CD8-positive, alpha-beta T cell (primary cell): ENCODE measurements at regions of chr1 and their contacts with region 1.

Region 1: GRCh38 chr1:160284782-160285344 is at the start of gene PEX19:
- DNase-seq: peak; percentile 87 to 96 (median 93)
- ATAC-seq: peak; percentile 100
- H3K4me3 ChIP-seq: peak within 1 kb of the TSS; percentile 73 to 89
- H3K4me3 Mint-ChIP-seq: peak within 1 kb of the TSS; percentile 94
- H3K27ac ChIP-seq: peak within 1 kb of the TSS; percentile 62 to 75
- H3K27ac Mint-ChIP-seq: peak within 1 kb of the TSS; percentile 91
- H3K4me1 ChIP-seq: peaks cover 22% of the 10 kb centered on the region
- H3K4me1 Mint-ChIP-seq: peaks cover 21% of the 10 kb centered on the region
- H3K27me3 ChIP-seq: no peaks in the 10 kb centered on the region
- H3K27me3 Mint-ChIP-seq: no peaks in the 10 kb centered on the region
- CTCF ChIP-seq: no peak
- total RNA-seq, gene PEX19: 36.0 to 37.4 TPM

Region 2: DNA sequence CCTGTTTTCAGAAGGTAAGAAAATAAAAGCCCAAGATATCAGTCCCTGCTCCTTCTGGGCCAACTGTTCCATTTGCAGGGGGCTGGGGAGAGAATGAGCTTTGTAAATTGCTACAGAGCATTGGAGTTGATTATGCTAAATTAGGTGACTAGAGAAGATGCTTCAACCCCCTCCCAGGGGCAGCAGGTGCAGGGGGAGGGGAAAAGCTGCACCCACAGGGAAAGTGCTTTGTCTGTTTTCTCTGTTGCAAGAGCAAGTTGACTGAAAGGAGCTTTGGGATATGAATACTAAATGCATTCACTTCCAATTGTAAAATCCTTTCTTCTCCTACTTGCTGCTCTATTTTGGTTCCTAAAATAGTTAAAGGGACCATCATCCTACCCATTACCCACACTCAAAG is 236.5 kb before region 1 on chr1:
- CTCF ChIA-PET with region 1: no interaction called
- POLR2A ChIA-PET with region 1: no interaction called
- intact Hi-C with region 1: no loop called
- DNase-seq: no peak
- ATAC-seq: no peak
- H3K4me3 ChIP-seq: no peak overlapping the region
- H3K4me3 Mint-ChIP-seq: no peak overlapping the region
- H3K27ac ChIP-seq: no peak overlapping the region
- H3K27ac Mint-ChIP-seq: no peak overlapping the region
- H3K4me1 ChIP-seq: peaks cover 6% of the 10 kb centered on the region
- H3K4me1 Mint-ChIP-seq: peaks cover 12% of the 10 kb centered on the region
- H3K27me3 ChIP-seq: peaks cover 0 to 2% of the 10 kb centered on the region in 2 experiments
- H3K27me3 Mint-ChIP-seq: peaks cover 20% of the 10 kb centered on the region
- CTCF ChIP-seq: no peak

Region 3: DNA sequence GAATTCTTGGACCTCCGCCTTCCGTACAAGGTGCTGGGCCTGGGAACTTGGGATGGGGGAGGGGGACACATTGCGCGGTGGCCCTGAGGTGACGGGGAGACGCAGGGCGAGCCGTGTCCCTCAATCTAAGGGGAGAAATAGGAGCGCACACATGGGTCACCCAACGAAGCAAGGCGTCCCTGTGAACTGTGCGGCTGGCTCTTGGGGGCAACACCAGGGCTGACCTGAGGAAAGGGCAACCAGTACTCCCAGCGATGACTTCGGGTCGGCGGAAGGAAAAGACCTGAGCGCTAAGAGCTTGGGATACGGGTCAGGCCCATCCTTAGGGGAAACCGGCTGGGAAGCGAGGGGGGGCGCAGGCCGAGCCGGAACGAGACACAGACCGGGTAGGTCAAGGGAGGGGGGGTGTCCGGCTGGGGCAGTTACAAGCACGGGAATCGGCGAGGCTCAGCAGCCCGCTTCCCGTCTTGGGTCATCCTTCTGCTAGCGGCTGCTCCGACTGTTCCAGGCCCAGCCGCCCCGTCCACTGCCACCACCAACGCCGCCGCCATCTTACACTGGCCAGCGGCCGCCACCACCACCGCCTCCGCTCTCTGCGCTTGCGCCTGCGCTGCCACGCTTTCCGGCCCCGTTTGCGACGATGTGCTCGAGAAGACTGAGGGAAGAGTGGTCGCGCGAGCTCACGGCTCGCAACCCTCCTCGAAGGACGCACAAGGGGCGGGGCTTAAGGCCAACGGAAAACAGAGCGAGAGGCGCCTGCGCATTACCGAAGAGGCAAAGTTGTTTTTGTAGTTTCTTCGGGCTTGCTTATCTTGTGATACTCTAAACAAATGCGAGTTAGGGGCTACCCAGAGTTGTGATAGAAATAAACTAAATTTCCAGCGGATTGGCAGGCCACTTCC is 22.7 kb before region 1 on chr1 and contains the start of gene DCAF8:
- CTCF ChIA-PET with region 1: interaction called, 39 read pairs
- POLR2A ChIA-PET with region 1: interaction called, 36 read pairs
- intact Hi-C with region 1: loop called (anchors 1 kb)
- DNase-seq: peak; percentile 97 to 99 (median 98)
- ATAC-seq: peak; percentile 87
- H3K4me3 ChIP-seq: peak within 1 kb of the TSS; percentile 91 to 99
- H3K4me3 Mint-ChIP-seq: peak within 1 kb of the TSS; percentile 96
- H3K27ac ChIP-seq: peak within 1 kb of the TSS; percentile 83 to 99
- H3K27ac Mint-ChIP-seq: peak within 1 kb of the TSS; percentile 98
- H3K4me1 ChIP-seq: peaks cover 31% of the 10 kb centered on the region
- H3K4me1 Mint-ChIP-seq: peaks cover 41% of the 10 kb centered on the region
- H3K27me3 ChIP-seq: no peaks in the 10 kb centered on the region
- H3K27me3 Mint-ChIP-seq: no peaks in the 10 kb centered on the region
- CTCF ChIP-seq: no peak
- total RNA-seq, gene DCAF8: 152 to 162 TPM